Right ventricle myocardium inferior (tissue), 1 donor: ENCODE measurements at regions of chr12 and their contacts with region 1.

Region 1: GRCh38 chr12:53324779-53325510 is 3.5 kb upstream of the AAAS start:
- DNase-seq: peak; percentile 97
- ATAC-seq: peak; percentile 89

Region 2: DNA sequence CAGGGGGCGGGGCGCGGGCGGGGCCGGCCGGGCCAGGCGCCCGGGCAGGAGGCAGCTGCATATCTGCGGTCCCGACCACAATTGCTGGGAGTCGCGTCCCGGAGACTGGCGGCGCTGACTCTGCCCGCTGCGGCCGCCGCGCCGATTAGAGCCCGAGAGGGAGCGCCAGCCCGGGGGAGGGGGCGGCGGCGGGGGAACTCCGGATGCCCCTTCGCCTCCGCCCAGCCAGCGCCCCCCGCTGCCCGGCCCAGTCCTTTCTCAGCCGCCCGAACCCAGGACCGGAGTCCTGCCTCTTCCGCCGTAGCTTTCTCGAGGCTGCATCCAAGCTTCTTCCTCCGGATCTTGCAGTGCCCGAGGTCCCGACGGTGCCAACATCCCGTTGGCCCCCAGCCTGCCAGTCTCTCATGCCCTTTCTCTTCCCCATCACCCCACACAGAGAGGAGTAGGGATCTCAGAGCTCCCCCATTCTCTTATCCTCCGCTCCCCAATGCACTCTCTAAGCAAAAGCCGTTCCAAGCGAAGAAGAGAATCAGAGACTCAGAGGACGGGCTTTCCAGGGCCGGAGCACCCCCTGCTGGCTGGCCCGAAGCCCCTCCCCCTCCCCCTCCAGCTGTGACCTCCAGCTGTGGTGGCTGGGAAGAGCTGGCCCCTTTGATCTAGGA is 20.0 kb after region 1 on chr12:
- intact Hi-C with region 1: loop called (anchors 1 kb)
- DNase-seq: peak; percentile 83
- ATAC-seq: peak; percentile 95

Region 3: DNA sequence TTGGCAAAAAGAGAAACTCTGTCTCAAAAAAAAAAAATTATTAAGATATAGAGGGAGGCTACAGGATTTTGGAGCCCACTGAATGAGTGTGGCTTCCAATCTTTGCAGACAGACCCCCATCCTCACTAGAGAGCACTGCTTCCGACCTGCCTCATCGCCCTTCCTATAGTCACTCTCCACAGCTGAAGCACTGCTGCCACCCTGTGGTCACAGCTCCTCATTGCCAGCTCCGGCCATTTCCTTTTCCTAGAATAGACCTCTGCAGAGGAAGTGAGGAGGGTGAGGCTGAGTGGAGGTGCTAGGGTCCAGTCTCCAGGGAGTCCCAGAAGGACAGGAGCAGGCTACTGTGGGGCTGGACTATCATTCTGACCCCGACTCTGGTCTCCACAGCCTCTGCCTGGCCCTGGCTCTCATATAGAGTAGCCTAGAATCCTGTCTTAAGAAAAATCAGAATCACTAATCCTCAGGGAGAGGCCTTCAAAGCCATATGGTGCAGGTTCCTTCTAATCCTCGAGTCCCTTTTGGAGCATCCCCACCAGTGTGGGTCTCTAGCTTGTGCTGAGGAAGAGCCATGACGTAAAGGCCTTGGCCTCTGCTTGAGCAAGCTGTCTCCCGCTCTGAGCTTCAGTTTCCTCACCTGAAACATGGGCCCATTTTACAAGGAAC is 183.7 kb after region 1 on chr12:
- intact Hi-C with region 1: loop called (anchors 2 kb)
- DNase-seq: peak; percentile 89
- ATAC-seq: peak; percentile 81